Activated naive CD4-positive, alpha-beta T cell treated with anti-CD3 and anti-CD28 coated beads, Interleukin-2, amount 10 ng/mL, durations not matched to agents 7 days and 5 days (primary cell): ENCODE measurements at regions of chr16 and their contacts with region 1.

Region 1: GRCh38 chr16:89710664-89711564 is 9.4 kb upstream of the SPATA2L start:
- DNase-seq: no peak
- H3K4me3 Mint-ChIP-seq: no peak overlapping the region
- H3K27ac Mint-ChIP-seq: no peak overlapping the region
- H3K4me1 Mint-ChIP-seq: peaks cover 13% of the 10 kb centered on the region
- H3K27me3 Mint-ChIP-seq: peaks cover 2% of the 10 kb centered on the region

Region 2: DNA sequence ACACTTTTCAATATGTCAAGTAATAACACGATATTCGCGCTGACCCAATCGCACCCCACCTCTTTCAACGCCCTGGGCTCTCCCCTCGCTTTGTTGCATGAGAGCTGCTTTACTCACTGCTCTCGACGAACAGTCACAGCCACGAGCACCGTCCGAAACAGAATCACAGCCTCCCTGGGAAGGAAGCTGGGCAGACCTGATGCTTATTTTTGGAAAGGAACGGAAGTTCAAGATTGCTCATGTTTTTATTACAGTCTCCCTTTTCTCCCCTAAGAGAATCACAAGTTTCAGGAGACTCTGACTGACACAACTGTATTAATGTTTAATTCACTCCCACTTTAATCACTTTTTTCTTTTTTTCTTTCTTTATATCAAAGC is 288.4 kb before region 1 on chr16:
- CTCF ChIA-PET with region 1: no interaction called
- DNase-seq: no peak
- H3K4me3 Mint-ChIP-seq: peak overlapping the region; percentile 10
- H3K27ac Mint-ChIP-seq: peak overlapping the region; percentile 79
- H3K4me1 Mint-ChIP-seq: peaks cover 82% of the 10 kb centered on the region
- H3K27me3 Mint-ChIP-seq: no peaks in the 10 kb centered on the region

Region 3: GRCh38 chr16:89720813-89721545 is 10.1 kb after region 1 on chr16 and contains the starts of genes VPS9D1 and ZNF276:
- CTCF ChIA-PET with region 1: interaction called, 13 read pairs
- DNase-seq: peak; percentile 89
- H3K4me3 Mint-ChIP-seq: peak within 1 kb of the TSS; percentile 91
- H3K27ac Mint-ChIP-seq: peak within 1 kb of the TSS; percentile 98
- H3K4me1 Mint-ChIP-seq: peaks cover 39% of the 10 kb centered on the region
- H3K27me3 Mint-ChIP-seq: peaks cover 9% of the 10 kb centered on the region

Region 4: DNA sequence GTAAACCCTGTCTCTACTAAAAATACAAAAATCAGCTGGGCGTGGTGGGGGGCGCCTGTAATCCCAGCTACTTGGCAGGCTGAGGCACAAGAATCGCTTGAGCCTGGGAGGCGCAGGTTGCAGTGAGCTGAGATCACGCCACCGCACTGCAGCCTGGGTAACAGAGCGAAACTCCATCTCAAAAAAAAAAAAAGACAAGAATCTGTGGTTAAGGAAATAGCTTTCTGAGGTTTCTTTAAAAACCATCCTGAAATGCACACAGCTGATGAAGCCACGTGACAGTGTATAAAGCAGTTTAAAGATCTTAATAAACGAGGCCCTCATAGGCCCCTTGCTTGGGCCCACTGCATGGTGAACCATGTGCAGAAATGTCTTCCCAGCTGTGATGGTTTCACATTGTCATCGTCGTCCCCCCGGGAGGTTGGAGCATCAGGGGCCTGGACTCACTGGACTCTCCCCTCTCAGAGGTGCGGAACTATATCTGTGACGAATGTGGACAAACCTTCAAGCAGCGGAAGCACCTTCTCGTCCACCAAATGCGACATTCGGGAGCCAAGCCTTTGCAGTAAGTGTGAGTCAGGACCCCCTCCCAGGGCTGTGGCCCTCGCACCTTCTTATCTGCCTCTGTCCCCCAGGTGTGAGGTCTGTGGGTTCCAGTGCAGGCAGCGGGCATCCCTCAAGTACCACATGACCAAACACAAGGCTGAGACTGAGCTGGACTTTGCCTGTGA is 26.6 kb after region 1 on chr16:
- CTCF ChIA-PET with region 1: interaction called, 12 read pairs
- DNase-seq: peak; percentile 77
- H3K4me3 Mint-ChIP-seq: peak overlapping the region; percentile 21
- H3K27ac Mint-ChIP-seq: peak overlapping the region; percentile 89
- H3K4me1 Mint-ChIP-seq: peaks cover 36% of the 10 kb centered on the region
- H3K27me3 Mint-ChIP-seq: no peaks in the 10 kb centered on the region

Region 5: GRCh38 chr16:89786474-89787364 is 75.8 kb after region 1 on chr16:
- CTCF ChIA-PET with region 1: interaction called, 116 read pairs
- DNase-seq: no peak
- H3K4me3 Mint-ChIP-seq: no peak overlapping the region
- H3K27ac Mint-ChIP-seq: peak overlapping the region; percentile 67
- H3K4me1 Mint-ChIP-seq: peaks cover 33% of the 10 kb centered on the region
- H3K27me3 Mint-ChIP-seq: no peaks in the 10 kb centered on the region

Region 6: DNA sequence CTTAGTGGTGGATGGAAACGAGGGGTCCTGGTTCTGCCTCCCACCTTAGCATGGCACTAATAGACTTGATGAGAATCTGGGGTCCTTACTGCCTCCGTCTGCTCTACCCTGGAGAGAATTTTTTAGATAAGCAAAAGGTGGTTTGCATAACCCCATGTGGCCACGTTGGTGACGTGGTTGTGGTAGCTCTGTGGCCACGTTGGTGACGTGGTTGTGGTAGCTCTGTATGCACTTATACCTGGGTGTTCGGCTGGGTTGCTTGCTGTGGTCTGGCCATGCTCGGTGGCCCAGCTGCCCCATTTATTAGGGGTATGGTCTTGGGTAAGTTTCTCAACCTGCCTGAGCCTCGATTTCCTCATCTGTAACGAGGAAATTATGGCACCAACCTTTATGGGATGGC is 130.4 kb after region 1 on chr16:
- CTCF ChIA-PET with region 1: no interaction called
- DNase-seq: peak; percentile 49
- H3K4me3 Mint-ChIP-seq: no peak overlapping the region
- H3K27ac Mint-ChIP-seq: no peak overlapping the region
- H3K4me1 Mint-ChIP-seq: peaks cover 48% of the 10 kb centered on the region
- H3K27me3 Mint-ChIP-seq: peaks cover 42% of the 10 kb centered on the region

Region 7: DNA sequence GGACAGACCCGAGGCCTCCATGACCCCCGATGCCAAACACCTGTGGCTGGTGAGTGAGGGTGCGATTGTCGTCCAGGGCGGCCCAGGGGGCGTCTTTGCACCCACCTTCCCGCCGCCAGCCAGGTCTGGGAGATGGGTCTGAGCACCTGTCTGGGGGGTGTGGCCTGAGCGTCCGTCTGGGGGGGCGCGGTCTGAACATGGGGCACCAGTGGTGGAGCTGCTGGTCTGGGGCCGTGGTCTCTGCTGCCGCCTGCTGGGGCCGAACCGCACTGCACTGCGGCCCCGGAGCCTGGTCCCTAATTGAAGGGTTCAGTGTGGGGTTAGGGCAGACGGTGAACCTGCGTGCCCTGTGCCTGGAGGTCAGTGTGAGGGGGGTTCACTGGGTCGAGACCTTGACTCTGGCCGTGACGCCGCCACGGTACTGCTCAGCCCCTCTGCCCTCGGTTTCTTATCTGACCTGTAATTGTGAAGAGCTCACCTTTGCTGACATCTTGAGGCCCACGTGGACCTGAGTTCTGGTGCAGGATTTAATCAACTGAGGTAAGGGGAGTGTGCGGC is 149.9 kb after region 1 on chr16:
- CTCF ChIA-PET with region 1: interaction called, 63 read pairs
- DNase-seq: peak; percentile 83
- H3K4me3 Mint-ChIP-seq: no peak overlapping the region
- H3K27ac Mint-ChIP-seq: no peak overlapping the region
- H3K4me1 Mint-ChIP-seq: peaks cover 46% of the 10 kb centered on the region
- H3K27me3 Mint-ChIP-seq: peaks cover 25% of the 10 kb centered on the region

Region 8: DNA sequence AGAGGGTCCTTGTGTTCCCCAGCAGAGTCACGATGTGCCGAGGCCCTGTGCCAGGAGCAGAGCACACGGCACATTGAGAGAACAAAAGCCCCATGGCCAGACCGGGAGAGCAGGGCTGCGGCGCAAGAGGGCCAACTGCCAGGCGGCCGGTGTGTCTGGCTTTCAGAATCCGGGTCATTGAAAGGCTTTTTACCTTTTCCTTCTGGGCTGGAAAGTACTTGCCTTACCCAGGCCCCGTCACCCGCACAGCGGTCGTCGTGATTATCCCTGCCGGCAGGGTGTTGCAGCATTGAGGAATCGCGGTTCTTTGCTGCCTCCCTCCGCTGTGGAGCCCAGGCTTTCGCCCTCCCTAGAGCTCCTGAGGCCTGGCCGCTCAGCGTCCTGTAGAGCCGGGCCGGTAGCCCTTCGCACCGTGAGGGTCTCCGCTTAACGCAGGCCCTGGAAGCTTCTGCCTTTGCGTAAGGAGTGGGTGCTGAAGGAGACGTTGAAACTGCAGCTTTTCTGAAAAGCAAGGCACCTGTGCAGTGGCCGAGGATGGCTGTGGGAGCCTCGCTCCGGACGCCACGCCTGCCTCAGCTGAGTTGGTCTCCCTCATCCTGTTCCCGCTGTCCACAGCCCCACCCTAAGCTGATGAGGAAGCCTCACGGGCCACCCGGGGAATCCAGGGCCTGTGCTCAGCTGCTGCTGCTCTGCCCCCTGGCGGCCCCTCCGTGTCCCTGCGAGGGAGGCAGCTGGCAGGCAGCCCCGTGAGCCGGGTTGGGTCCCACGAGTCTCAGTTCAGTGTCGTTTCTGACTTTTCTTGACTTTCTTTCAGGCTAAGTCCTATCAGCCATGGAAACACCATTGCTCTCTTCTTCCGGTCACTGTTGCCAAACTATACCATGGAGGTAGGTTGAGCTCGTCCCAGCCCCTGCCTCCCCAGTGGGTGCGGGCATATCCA is 199.1 kb after region 1 on chr16:
- CTCF ChIA-PET with region 1: interaction called, 29 read pairs
- DNase-seq: peak; percentile 76
- H3K4me3 Mint-ChIP-seq: no peak overlapping the region
- H3K27ac Mint-ChIP-seq: no peak overlapping the region
- H3K4me1 Mint-ChIP-seq: peaks cover 4% of the 10 kb centered on the region
- H3K27me3 Mint-ChIP-seq: no peaks in the 10 kb centered on the region